ENCODE measurements at regions of chr14 and their contacts with region 1.

Region 1: DNA sequence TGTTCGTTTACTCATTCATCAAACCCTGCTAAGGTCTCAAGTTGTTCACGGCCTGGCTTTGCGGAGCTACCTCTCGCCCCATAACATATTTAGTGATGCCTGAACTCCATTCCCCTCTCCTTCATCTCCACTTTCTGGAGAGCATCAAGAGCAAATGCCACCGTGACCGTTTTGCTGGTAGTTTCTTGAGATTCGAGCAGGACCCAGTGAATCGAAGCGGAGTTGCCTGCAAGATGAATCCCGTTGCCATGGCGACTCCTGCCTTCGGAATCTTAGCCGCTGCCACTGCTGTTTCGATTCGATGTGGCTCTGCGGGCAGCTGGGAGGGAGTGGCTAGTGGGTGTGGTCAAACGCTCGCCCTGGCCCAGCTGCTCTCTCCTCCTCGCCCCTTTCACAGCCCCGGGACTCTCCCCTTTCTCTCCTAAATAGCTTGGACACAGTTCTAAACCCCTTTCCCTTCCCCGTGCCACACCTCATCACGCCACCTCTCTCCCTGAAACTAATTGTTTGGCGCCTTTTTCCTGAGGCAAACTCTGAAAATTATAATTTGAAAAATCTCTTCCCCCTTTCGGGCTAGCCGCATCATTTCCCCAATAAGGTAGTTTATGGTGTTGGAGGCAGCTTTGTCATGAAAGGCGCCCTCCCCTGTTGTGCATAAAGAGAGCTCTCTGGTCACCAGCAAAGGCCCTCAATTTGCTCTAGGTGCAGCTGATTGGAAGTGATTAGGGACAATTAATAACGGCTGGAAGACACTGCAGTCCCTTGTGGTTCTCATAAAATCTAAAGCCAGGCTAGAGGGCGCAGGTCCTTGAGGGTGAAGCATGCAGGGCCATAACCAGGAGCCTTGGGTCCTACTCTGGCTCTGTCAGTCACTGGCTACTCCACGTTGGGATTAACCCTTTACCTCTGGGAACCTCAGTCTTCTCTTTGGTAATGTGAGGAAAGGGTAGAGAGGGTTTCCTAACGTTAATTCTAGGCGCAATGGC is 1.6 kb downstream of the DAAM1 start:
- DNase-seq: peak; percentile 67 to 89 (median 76)
- H3K4me3 ChIP-seq: peak overlapping the region; percentile 77 to 82
- H3K4me3 Mint-ChIP-seq: peak overlapping the region; percentile 95 to 100 (median 98)
- H3K27ac ChIP-seq: peak overlapping the region; percentile 88
- H3K27ac Mint-ChIP-seq: peak overlapping the region; percentile 84 to 99 (median 98)
- H3K4me1 ChIP-seq: peaks cover 16% of the 10 kb centered on the region
- H3K4me1 Mint-ChIP-seq: peaks cover 14 to 34% (median 16%) of the 10 kb centered on the region in 4 donors
- H3K27me3 ChIP-seq: peaks cover 5% of the 10 kb centered on the region
- H3K27me3 Mint-ChIP-seq: peaks cover 0 to 3% of the 10 kb centered on the region in 2 donors

Region 2: DNA sequence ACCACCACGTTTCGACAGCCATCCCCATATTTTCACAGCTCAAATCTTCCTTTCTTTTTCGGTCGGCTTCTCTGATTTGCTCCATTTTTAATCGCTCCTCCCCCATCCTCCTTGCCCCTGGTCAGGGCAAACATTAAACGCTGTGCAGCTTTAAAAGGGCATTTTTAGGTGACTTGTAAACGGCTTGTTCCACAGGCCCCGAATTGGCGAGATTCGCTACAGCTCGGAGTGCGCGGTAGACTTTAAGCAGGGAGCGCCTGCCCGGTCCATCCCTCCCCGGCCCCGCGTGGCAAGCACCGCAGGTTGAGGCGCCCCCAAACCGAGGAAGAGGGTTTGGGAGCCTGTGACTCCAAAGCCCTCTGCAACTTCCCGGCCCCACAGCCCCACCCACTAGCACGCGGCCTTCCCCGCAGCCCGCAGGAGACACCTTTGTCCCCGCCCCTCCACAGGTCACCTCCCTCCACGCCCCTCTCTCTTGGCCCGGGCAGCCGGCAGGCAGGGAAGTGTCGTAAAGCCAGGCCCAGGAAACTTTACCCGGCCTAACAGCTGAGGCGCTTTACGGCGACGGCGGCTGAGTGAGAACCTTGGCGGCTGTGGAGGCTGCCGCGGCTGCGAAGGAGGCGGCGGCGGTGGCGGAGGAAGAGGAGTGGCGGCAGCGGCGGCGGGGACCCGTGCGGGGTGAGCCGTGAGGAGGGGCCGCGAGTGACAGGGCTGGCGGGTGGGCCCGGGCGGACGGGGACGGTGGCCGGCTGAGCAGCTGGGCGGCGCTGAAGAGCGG is 1799.9 kb before region 1 on chr14 and contains the start of gene NAA30:
- CTCF ChIA-PET with region 1: no interaction called
- POLR2A ChIA-PET with region 1: no interaction called
- intact Hi-C with region 1: loop called (anchors 5 kb)
- DNase-seq: peak; percentile 93 to 98 (median 96)
- H3K4me3 ChIP-seq: peak within 1 kb of the TSS; percentile 50 to 85
- H3K4me3 Mint-ChIP-seq: peak within 1 kb of the TSS; percentile 90 to 98 (median 94)
- H3K27ac ChIP-seq: peak within 1 kb of the TSS; percentile 83
- H3K27ac Mint-ChIP-seq: peak within 1 kb of the TSS; percentile 88 to 97 (median 96)
- H3K4me1 ChIP-seq: peaks cover 42% of the 10 kb centered on the region
- H3K4me1 Mint-ChIP-seq: peaks cover 30 to 53% (median 42%) of the 10 kb centered on the region in 4 donors
- H3K27me3 ChIP-seq: no peaks in the 10 kb centered on the region
- H3K27me3 Mint-ChIP-seq: no peaks in the 10 kb centered on the region
- total RNA-seq, gene NAA30: 18.6 to 21.8 TPM

Region 3: GRCh38 chr14:58427281-58428117 is 762.6 kb before region 1 on chr14 and contains the starts of genes KIAA0586 and TIMM9:
- CTCF ChIA-PET with region 1: no interaction called
- POLR2A ChIA-PET with region 1: interaction called, 4 read pairs
- intact Hi-C with region 1: loop called (anchors 1 kb)
- DNase-seq: peak; percentile 95 to 99 (median 98)
- H3K4me3 ChIP-seq: peak within 1 kb of the TSS; percentile 90 to 96
- H3K4me3 Mint-ChIP-seq: peak within 1 kb of the TSS; percentile 91 to 97 (median 94)
- H3K27ac ChIP-seq: peak within 1 kb of the TSS; percentile 88
- H3K27ac Mint-ChIP-seq: peak within 1 kb of the TSS; percentile 94 to 100 (median 98)
- H3K4me1 ChIP-seq: peaks cover 39% of the 10 kb centered on the region
- H3K4me1 Mint-ChIP-seq: peaks cover 23 to 67% (median 44%) of the 10 kb centered on the region in 4 donors
- H3K27me3 ChIP-seq: no peaks in the 10 kb centered on the region
- H3K27me3 Mint-ChIP-seq: peaks cover 0 to 2% of the 10 kb centered on the region in 2 donors
- total RNA-seq, gene KIAA0586: 43.3 to 48.2 TPM
- total RNA-seq, gene TIMM9: 28.0 to 28.3 TPM

Region 4: DNA sequence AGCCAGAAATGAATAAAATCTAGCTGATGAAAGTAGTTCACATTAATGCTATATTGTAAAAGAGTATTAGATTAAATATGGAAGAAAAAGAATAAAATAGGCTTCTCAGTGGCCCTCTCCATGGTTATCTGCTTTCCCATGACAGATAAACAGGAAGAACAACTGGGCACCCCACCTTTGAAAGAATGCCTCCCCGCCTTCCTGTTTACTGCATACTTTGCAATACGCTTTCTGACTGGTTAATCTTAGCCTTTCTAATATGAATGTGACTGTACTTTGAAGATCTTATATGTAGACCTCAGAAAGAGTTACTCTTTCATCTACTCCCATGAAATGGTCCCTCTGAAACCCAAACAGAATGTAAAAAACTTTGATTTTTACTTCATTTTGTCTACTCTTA is 35.7 kb before region 1 on chr14:
- CTCF ChIA-PET with region 1: interaction called, 3 read pairs
- POLR2A ChIA-PET with region 1: interaction called, 12 read pairs
- intact Hi-C with region 1: loop called (anchors 1 kb)
- DNase-seq: peak in 4 of 5 donors; percentile 11 to 41 (median 32)
- H3K4me3 ChIP-seq: no peak overlapping the region
- H3K4me3 Mint-ChIP-seq: peak overlapping the region in 6 of 8 donors; percentile 26 to 76 (median 46)
- H3K27ac ChIP-seq: no peak overlapping the region
- H3K27ac Mint-ChIP-seq: peak overlapping the region; percentile 25 to 88 (median 76)
- H3K4me1 ChIP-seq: peaks cover 20% of the 10 kb centered on the region
- H3K4me1 Mint-ChIP-seq: peaks cover 18 to 42% (median 31%) of the 10 kb centered on the region in 4 donors
- H3K27me3 ChIP-seq: no peaks in the 10 kb centered on the region
- H3K27me3 Mint-ChIP-seq: no peaks in the 10 kb centered on the region

Region 5: DNA sequence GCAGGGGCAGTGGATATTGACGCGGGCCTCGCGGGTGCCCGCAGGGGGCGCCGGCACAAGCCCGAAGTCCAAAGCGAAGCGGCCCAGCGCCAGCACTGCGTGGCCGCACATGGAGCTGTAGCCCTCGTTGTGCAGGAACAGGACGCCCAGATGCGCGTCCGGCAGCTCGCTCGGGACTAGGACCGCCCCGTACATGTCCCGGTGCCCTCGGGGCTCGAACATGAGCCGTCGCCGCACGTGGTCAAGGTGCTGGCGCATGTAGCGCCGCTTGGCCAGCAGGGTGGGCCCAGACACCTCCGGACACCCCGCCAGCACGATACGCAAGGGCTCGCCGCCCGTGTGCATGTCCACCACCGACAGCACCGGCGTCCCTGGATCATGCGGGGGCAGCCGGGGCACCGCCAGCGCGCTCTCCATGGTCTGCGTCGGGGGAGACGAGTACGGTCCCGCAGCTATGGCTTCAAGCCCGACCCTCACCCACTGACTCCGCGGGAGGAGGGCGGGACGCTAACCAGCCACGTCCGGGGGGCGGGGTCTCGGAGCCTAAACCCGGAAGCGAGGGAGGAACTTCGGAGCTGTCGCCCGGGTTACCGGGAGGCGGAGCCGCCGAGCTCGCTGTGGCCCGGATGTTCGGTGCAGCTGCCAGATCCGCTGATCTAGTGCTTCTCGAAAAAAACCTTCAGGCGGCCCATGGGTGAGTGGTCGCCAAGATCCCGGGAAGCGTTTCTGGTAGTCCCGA is 294.0 kb after region 1 on chr14 and contains the starts of genes JKAMP and L3HYPDH:
- CTCF ChIA-PET with region 1: no interaction called
- POLR2A ChIA-PET with region 1: interaction called, 24 read pairs
- intact Hi-C with region 1: loop called (anchors 1 kb)
- DNase-seq: peak; percentile 95 to 97 (median 95)
- H3K4me3 ChIP-seq: peak within 1 kb of the TSS; percentile 85 to 87
- H3K4me3 Mint-ChIP-seq: peak within 1 kb of the TSS; percentile 92 to 98 (median 96)
- H3K27ac ChIP-seq: peak within 1 kb of the TSS; percentile 82
- H3K27ac Mint-ChIP-seq: peak within 1 kb of the TSS; percentile 90 to 99 (median 96)
- H3K4me1 ChIP-seq: peaks cover 63% of the 10 kb centered on the region
- H3K4me1 Mint-ChIP-seq: peaks cover 52 to 72% (median 58%) of the 10 kb centered on the region in 4 donors
- H3K27me3 ChIP-seq: no peaks in the 10 kb centered on the region
- H3K27me3 Mint-ChIP-seq: no peaks in the 10 kb centered on the region
- total RNA-seq, gene JKAMP: 29.9 to 31.9 TPM
- total RNA-seq, gene L3HYPDH: 52.2 to 52.4 TPM

Region 6: GRCh38 chr14:60164712-60165546 is 974.9 kb after region 1 on chr14 and contains the start of gene DHRS7:
- CTCF ChIA-PET with region 1: no interaction called
- POLR2A ChIA-PET with region 1: interaction called, 3 read pairs
- intact Hi-C with region 1: loop called (anchors 2 kb)
- DNase-seq: peak; percentile 61 to 74 (median 65)
- H3K4me3 ChIP-seq: peak within 1 kb of the TSS; percentile 74 to 76
- H3K4me3 Mint-ChIP-seq: peak within 1 kb of the TSS; percentile 96 to 99 (median 99)
- H3K27ac ChIP-seq: peak within 1 kb of the TSS; percentile 82
- H3K27ac Mint-ChIP-seq: peak within 1 kb of the TSS; percentile 97 to 99 (median 99)
- H3K4me1 ChIP-seq: peaks cover 53% of the 10 kb centered on the region
- H3K4me1 Mint-ChIP-seq: peaks cover 36 to 56% (median 47%) of the 10 kb centered on the region in 4 donors
- H3K27me3 ChIP-seq: no peaks in the 10 kb centered on the region
- H3K27me3 Mint-ChIP-seq: no peaks in the 10 kb centered on the region
- total RNA-seq, gene DHRS7: 63.5 to 69.6 TPM